ENCODE measurements at regions of chr16 and their contacts with region 1.

Region 1: GRCh38 chr16:81018496-81018895 is 11.5 kb downstream of the CENPN start:
- DNase-seq: peak in 41 of 42 donors; percentile 35 to 89 (median 73)

Region 2: GRCh38 chr16:80507538-80507937 is 511.0 kb before region 1 on chr16:
- intact Hi-C with region 1: no loop called
- DNase-seq: no peak

Region 3: DNA sequence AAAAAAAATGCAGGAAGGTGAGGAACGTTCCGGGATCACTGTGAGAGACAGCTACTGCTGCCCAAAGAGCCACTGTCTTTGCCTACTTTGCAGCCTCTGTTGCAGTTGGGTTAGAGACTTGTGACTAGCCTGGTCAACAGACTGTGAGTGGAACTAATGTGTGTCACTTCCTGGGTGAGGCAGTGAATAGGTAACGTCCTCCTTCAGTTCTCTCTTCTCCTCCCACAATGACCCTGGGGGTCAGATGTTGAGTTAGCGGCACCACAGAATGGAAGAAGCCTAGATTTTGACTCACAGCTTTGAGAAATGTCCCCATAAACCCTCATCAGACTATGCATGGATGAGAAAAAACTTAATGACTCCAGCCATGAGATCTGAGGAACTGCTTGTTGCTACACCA is 53.3 kb after region 1 on chr16:
- intact Hi-C with region 1: no loop called
- DNase-seq: no peak

Region 4: GRCh38 chr16:81198635-81199034 is 180.1 kb after region 1 on chr16:
- intact Hi-C with region 1: loop called (anchors 10 kb)
- DNase-seq: peak in 31 of 42 donors; percentile 13 to 80 (median 44)